ENCODE measurements at regions of chr6 and their contacts with region 1.

Region 1: GRCh38 chr6:114096561-114097172 is 125.7 kb upstream of the HDAC2 start:
- DNase-seq: no peak
- H3K4me3 ChIP-seq: no peak overlapping the region
- H3K27ac ChIP-seq: no peak overlapping the region
- H3K4me1 ChIP-seq: no peaks in the 10 kb centered on the region
- H3K27me3 ChIP-seq: no peaks in the 10 kb centered on the region
- CTCF ChIP-seq: peak; percentile 37 to 80 (median 52)
- POLR2A ChIP-seq: no peak

Region 2: DNA sequence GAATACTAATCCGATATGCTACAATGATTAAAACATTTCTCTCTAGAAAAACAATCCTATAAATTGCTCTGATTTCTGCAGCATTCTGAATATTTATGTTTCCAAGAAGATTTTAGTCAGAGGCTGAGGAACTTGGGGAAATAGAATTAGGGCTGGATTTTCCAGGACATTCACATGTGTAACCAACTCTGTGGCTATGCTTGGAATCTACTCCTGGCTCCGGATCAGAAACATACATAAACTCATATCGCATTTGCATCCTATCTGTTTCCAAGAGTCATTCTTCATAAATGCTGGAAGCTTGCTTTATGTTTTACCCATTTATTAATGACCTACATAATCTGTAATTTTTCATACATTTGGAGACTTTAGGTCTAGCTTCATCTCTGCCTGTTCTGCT is 699.4 kb before region 1 on chr6:
- intact Hi-C with region 1: no loop called
- DNase-seq: no peak
- H3K4me3 ChIP-seq: no peak overlapping the region
- H3K27ac ChIP-seq: no peak overlapping the region
- H3K4me1 ChIP-seq: no peaks in the 10 kb centered on the region
- H3K27me3 ChIP-seq: no peaks in the 10 kb centered on the region
- CTCF ChIP-seq: no peak
- POLR2A ChIP-seq: no peak

Region 3: GRCh38 chr6:113858480-113859348 is 238.0 kb before region 1 on chr6:
- intact Hi-C with region 1: no loop called
- DNase-seq: peak; percentile 92
- H3K4me3 ChIP-seq: peak overlapping the region; percentile 68 to 72
- H3K27ac ChIP-seq: peak overlapping the region; percentile 90 to 94
- H3K4me1 ChIP-seq: no peaks in the 10 kb centered on the region
- H3K27me3 ChIP-seq: no peaks in the 10 kb centered on the region
- CTCF ChIP-seq: peak; percentile 97 to 99 (median 98)
- POLR2A ChIP-seq: no peak

Region 4: DNA sequence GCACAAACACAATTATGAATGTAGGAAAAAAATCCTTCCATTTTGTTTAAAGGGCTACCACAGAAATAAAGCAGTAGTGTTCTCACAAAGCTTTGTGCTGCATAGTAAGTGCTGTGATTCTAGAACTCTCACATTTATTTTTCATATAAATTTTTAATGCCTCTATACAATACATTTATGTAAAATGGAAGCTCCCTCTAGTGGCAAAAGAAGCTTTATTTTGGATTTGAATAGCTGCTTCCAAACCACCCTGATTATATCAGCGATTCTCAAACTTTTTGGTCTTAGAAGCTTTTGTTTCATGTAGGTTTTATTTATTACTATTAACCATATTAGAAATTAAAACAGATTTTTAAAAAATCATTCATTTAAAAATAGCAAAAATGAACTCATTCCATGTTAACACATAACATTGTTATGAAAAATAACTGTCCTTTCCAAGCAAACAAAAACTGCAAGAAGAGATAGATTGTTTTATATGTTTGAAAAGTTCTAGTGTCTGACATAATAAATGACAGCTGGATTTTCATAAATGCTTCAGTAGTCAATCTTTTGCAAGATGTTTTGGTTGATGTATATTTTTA is 207.7 kb after region 1 on chr6:
- intact Hi-C with region 1: loop called (anchors 10 kb)
- DNase-seq: no peak
- H3K4me3 ChIP-seq: no peak overlapping the region
- H3K27ac ChIP-seq: no peak overlapping the region
- H3K4me1 ChIP-seq: no peaks in the 10 kb centered on the region
- H3K27me3 ChIP-seq: no peaks in the 10 kb centered on the region
- CTCF ChIP-seq: peak in 3 of 4 experiments; percentile 31 to 47 (median 47)
- POLR2A ChIP-seq: no peak

Measured in prostate gland (tissue), 2 donors.